ENCODE measurements at regions of chr5 and their contacts with region 1.

Region 1: DNA sequence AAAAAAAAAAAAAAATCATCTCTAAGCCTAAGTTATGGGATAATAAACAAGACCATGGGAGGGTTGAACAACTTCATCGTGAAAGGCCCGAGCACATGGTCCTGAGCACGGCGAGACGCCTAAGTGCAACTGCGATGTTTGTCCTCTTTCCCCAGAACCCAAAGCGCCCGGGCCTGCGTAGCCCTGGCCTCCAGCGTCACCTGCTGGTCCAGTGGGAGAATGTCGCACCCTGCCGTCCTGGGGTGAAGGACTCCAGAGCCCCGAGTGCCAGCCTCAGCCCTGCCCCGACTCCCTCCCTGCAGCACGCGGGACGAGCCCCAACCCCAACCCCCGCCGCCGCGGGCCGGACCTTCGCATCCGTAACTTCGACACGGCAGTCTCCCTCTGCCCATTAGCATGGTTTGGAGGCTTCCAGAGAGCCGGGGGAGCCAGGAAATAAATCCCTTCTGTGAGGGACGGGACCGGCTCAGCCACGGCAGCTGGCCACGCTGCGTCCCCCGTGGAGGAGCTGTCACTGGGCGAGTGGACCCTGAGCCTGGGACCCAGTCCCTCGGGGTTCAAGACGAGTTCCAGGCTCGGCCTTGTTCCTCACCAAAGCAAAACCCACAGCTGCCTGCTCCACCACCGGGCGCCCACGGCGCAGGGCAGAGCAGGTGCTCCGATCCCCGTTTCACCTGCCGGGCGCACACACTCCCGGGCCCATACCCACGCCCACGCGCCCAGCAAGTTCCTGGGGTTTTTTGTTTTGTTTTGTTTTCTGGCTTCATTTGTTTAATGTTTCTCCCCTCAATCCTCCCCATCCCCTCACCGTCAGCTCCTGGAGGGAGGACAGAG is 132.5 kb upstream of the HAND1 start:
- DNase-seq: peak; percentile 84 to 88
- ATAC-seq: peak; percentile 93 to 98
- H3K4me3 ChIP-seq: peak overlapping the region; percentile 33
- H3K27ac ChIP-seq: peak overlapping the region in 1 of 2 experiments; percentile 69; a peak in 3 of 6 replicates
- H3K4me1 ChIP-seq: peaks cover 4% of the 10 kb centered on the region; the same call in 1 of the 3 replicates
- CTCF ChIP-seq: peak; percentile 94
- EP300 ChIP-seq: no peak
- POLR2A ChIP-seq: no peak
- RAD21 ChIP-seq: peak; percentile 99

Region 2: GRCh38 chr5:154583545-154584496 is 26.7 kb before region 1 on chr5:
- CTCF ChIA-PET with region 1: interaction called, 14 read pairs
- POLR2A ChIA-PET with region 1: no interaction called
- DNase-seq: peak; percentile 53 to 80
- ATAC-seq: peak; percentile 92 to 95
- H3K4me3 ChIP-seq: peak overlapping the region; percentile 13; the same call in 1 of the 3 replicates
- H3K27ac ChIP-seq: peak overlapping the region; percentile 47 to 62
- H3K4me1 ChIP-seq: peaks cover 50% of the 10 kb centered on the region
- CTCF ChIP-seq: no peak
- EP300 ChIP-seq: no peak
- POLR2A ChIP-seq: no peak
- RAD21 ChIP-seq: no peak

Region 3: GRCh38 chr5:154597014-154597413 is 13.5 kb before region 1 on chr5:
- CTCF ChIA-PET with region 1: interaction called, 11 read pairs
- POLR2A ChIA-PET with region 1: no interaction called
- DNase-seq: no peak
- ATAC-seq: no peak
- H3K4me3 ChIP-seq: no peak overlapping the region
- H3K27ac ChIP-seq: no peak overlapping the region; a peak in 1 of 6 replicates
- H3K4me1 ChIP-seq: peaks cover 16% of the 10 kb centered on the region; the same call in 2 of the 3 replicates
- CTCF ChIP-seq: no peak
- EP300 ChIP-seq: no peak
- POLR2A ChIP-seq: no peak
- RAD21 ChIP-seq: no peak

Region 4: DNA sequence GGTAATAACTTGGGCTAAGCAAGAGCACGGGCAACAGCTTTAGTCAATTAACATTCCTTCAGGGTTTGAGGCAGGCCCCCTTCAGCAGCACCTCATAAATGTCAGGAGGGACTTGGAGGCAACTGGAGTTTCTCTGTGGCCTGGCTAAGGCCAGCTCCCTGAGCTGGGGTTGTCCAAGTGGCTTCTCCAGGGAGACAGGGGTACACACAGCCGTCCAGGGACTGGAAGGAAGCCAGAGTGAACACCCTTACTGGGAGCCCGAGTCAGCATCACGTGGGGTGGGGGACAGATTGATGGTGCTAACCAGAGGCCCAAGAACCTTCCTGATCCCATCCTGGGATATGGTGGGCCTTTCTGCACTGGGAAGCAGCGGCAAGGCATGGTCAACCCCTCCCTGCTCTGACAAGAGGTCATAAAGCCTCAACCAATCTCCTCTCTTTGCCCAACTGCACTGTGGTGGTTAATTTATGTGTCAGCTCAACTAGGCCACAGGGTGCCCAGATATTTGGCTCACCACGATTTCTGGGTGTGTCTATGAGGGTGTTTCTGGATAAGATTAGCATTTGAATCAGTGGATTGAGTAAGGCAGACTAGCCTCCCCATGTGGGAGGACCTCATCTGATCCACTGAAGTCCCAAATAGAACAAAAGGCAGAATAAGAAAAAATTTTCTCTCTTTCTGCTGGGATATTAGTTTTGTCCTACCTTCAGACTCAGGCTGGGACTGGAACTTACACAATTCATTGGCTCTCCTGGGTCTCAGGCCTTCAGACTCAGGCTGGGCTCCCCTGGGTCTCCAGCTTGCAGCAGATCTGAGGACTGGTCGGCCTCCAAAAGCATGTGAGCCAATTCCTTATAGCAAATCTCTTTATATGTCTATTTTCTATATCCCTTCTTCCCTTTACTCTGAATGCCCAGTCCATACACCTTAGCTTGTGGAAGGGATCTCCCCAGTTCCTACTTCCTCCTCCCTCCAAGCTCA is 17.4 kb after region 1 on chr5:
- CTCF ChIA-PET with region 1: interaction called, 10 read pairs
- POLR2A ChIA-PET with region 1: no interaction called
- DNase-seq: no peak
- ATAC-seq: no peak
- H3K4me3 ChIP-seq: no peak overlapping the region
- H3K27ac ChIP-seq: no peak overlapping the region
- H3K4me1 ChIP-seq: no peaks in the 10 kb centered on the region
- CTCF ChIP-seq: no peak
- EP300 ChIP-seq: no peak
- POLR2A ChIP-seq: no peak
- RAD21 ChIP-seq: no peak

Measured in A549 (cell line).